B cell (primary cell): ENCODE measurements at regions of chr12 and their contacts with region 1.

Region 1: DNA sequence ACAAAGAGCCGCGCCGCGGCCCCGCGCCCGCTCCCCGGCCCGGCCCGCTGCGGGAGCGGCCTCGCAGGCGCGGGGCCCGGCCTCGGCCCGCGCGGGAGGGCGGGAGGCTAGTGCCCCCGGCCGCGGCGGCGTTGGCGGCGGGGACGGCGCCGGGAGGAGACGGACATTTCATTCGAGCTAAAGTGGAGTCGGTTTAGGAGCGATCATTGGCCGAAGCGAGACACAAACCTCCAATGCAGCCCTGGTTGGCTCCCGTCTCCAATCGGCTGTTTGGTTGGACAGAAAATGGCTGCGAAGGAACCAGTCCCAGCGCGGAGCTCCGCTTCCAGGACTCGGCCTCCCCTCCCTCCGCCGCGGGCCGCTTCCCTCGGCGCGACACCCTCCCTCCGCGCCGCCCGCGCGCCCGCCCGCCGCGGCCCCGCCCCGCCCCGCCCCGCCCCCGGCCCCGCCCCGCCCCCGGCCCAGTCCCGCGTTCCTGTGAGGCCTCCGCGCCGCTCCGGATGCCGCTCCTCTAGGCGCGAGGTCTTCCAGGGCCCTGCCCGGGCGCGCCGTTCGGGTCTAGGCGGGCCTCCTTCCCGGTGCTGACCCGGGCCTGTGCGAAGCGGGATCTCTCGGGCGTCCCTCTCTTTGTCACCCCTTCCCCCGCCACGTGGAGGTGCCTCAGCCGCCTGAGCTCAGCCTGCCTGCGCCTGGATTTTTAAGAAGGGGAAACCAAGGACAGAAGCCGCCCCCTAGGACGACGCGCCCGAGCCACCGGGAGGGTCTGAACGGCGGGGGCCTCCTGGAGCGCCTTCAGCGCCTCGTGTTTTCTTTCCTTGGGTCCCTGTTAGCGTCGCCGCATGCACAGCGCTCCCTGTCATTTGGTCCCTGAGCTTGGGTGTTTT is at the start of gene NFYB:
- DNase-seq: peak; percentile 96
- ATAC-seq: peak; percentile 94
- H3K4me3 ChIP-seq: peak within 1 kb of the TSS; percentile 52 to 73 (median 67)
- H3K4me3 Mint-ChIP-seq: peak within 1 kb of the TSS; percentile 93
- H3K27ac ChIP-seq: peak within 1 kb of the TSS; percentile 43 to 70
- H3K27ac Mint-ChIP-seq: peak within 1 kb of the TSS; percentile 92
- H3K4me1 ChIP-seq: peaks cover 24 to 25% of the 10 kb centered on the region in 2 donors
- H3K4me1 Mint-ChIP-seq: peaks cover 16% of the 10 kb centered on the region
- H3K27me3 ChIP-seq: no peaks in the 10 kb centered on the region
- H3K27me3 Mint-ChIP-seq: no peaks in the 10 kb centered on the region
- CTCF ChIP-seq: no peak
- total RNA-seq, gene NFYB: 20.2 and 27.2 TPM in 2 replicates

Region 2: DNA sequence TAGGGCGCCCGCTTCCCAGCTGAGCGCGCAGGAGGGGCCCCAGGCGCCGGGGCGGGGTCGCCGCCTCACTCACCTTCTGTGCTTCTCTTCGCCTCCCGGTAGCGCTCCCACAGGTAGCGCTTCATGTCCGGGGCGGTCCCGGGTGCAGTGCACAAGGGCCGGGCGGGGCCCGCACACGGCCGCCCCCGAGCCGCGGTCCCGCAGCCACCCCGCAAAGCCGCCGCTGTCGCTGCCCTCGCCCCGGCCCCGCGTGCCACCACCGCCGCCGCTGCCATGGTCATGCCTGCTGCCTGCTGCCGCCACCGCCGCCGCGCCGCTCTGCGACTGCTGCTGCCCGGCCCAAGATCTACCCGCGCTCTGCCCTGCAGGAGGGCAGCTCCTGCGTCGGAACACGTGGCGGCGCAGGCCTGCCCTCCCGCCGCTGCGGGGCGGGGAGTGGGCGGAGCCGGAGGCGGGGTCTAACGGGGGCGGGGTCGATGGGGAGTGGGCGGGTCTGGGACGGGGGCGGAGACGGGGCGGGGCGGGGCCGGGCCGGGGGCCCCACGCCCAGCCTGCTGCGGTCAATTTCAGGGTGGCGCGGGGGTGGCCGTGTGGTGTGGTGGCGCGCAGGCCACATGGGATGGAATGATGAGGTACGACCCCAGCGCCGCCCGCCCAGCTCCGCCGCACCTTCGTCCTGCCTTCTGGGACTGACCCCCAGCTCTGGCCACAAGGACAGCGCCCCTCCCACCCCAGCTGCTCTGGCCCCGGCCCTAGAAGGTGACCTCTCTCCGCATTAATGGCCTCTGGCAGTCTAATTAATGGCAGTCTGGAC is 297.1 kb before region 1 on chr12 and contains the start of gene NT5DC3:
- CTCF ChIA-PET with region 1: no interaction called
- POLR2A ChIA-PET with region 1: interaction called, 4 read pairs
- intact Hi-C with region 1: loop called (anchors 1 kb)
- DNase-seq: peak; percentile 92
- ATAC-seq: peak; percentile 91
- H3K4me3 ChIP-seq: peak within 1 kb of the TSS in 4 of 5 experiments; percentile 50 to 86 (median 76)
- H3K4me3 Mint-ChIP-seq: peak within 1 kb of the TSS; percentile 89
- H3K27ac ChIP-seq: no peak within 1 kb of the TSS
- H3K27ac Mint-ChIP-seq: peak within 1 kb of the TSS; percentile 88
- H3K4me1 ChIP-seq: peaks cover 14 to 22% of the 10 kb centered on the region in 2 donors
- H3K4me1 Mint-ChIP-seq: peaks cover 27% of the 10 kb centered on the region
- H3K27me3 ChIP-seq: no peaks in the 10 kb centered on the region
- H3K27me3 Mint-ChIP-seq: no peaks in the 10 kb centered on the region
- CTCF ChIP-seq: no peak
- total RNA-seq, gene NT5DC3: 10.6 and 14.7 TPM in 2 replicates

Region 3: GRCh38 chr12:103965590-103966504 is 172.3 kb before region 1 on chr12 and contains the start of gene TDG:
- CTCF ChIA-PET with region 1: no interaction called
- POLR2A ChIA-PET with region 1: interaction called, 3 read pairs
- intact Hi-C with region 1: loop called (anchors 5 kb)
- DNase-seq: peak; percentile 98
- ATAC-seq: peak; percentile 94
- H3K4me3 ChIP-seq: peak within 1 kb of the TSS; percentile 70 to 96 (median 85)
- H3K4me3 Mint-ChIP-seq: peak within 1 kb of the TSS; percentile 98
- H3K27ac ChIP-seq: peak within 1 kb of the TSS; percentile 81 to 95
- H3K27ac Mint-ChIP-seq: peak within 1 kb of the TSS; percentile 97
- H3K4me1 ChIP-seq: peaks cover 26% of the 10 kb centered on the region in 2 donors
- H3K4me1 Mint-ChIP-seq: peaks cover 41% of the 10 kb centered on the region
- H3K27me3 ChIP-seq: no peaks in the 10 kb centered on the region
- H3K27me3 Mint-ChIP-seq: no peaks in the 10 kb centered on the region
- CTCF ChIP-seq: peak; percentile 26
- total RNA-seq, gene TDG: 35.5 and 40.5 TPM in 2 replicates

Region 4: DNA sequence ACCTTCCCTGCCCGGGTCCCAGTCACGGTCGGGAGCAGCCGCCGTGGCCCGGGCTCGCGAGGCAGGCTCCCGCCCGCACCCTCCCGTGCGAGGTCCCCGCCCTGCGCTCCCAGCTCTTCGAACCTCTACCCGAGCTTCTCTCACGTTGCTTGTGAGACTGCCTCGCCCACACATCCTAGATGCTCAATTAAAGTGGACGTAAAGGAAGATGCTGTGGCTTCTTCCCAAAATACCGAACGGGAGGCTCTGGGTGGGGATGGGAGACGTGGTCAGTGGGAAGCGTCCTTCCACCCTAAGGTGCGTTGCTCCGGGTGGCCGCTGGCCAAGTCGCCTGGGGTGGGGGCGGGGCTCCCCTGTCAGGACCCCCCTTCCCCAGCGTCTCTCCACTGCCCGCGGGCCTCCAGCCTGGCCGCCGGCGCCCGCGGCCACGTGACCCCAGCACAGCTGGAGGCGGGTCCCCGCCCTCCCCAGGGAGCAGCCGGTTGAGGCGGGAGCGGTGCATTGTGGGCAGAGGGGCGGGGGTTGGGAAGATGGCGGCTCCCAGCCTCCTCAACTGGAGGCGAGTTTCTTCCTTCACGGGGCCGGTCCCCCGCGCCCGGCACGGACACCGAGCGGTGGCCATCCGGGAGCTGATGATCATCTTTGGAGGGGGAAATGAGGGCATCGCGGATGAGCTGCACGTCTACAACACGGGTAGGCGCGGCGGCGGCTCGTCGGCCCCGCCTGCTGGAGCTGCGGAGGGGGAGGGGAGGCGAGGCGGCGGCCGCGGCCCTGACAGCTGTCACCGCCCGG is 73.9 kb before region 1 on chr12 and contains the start of gene HCFC2:
- CTCF ChIA-PET with region 1: interaction called, 3 read pairs
- POLR2A ChIA-PET with region 1: no interaction called
- intact Hi-C with region 1: loop called (anchors 1 kb)
- DNase-seq: peak; percentile 94
- ATAC-seq: peak; percentile 92
- H3K4me3 ChIP-seq: peak within 1 kb of the TSS; percentile 80 to 95 (median 85)
- H3K4me3 Mint-ChIP-seq: peak within 1 kb of the TSS; percentile 94
- H3K27ac ChIP-seq: peak within 1 kb of the TSS; percentile 36 to 79
- H3K27ac Mint-ChIP-seq: peak within 1 kb of the TSS; percentile 93
- H3K4me1 ChIP-seq: peaks cover 10 to 14% of the 10 kb centered on the region in 2 donors
- H3K4me1 Mint-ChIP-seq: peaks cover 17% of the 10 kb centered on the region
- H3K27me3 ChIP-seq: no peaks in the 10 kb centered on the region
- H3K27me3 Mint-ChIP-seq: peaks cover 9% of the 10 kb centered on the region
- CTCF ChIP-seq: no peak
- total RNA-seq, gene HCFC2: 10.5 and 11.6 TPM in 2 replicates

Region 5: GRCh38 chr12:104303538-104304151 is 165.5 kb after region 1 on chr12 and contains the start of gene EID3:
- CTCF ChIA-PET with region 1: no interaction called
- POLR2A ChIA-PET with region 1: interaction called, 5 read pairs
- intact Hi-C with region 1: loop called (anchors 5 kb)
- DNase-seq: peak; percentile 89
- ATAC-seq: peak; percentile 97
- H3K4me3 ChIP-seq: peak within 1 kb of the TSS; percentile 19 to 74 (median 62)
- H3K4me3 Mint-ChIP-seq: peak within 1 kb of the TSS; percentile 89
- H3K27ac ChIP-seq: peak within 1 kb of the TSS; percentile 54 to 74
- H3K27ac Mint-ChIP-seq: peak within 1 kb of the TSS; percentile 86
- H3K4me1 ChIP-seq: peaks cover 15 to 19% of the 10 kb centered on the region in 2 donors
- H3K4me1 Mint-ChIP-seq: peaks cover 52% of the 10 kb centered on the region
- H3K27me3 ChIP-seq: no peaks in the 10 kb centered on the region
- H3K27me3 Mint-ChIP-seq: no peaks in the 10 kb centered on the region
- CTCF ChIP-seq: no peak
- total RNA-seq, gene EID3: 9.2 and 9.4 TPM in 2 replicates

Region 6: GRCh38 chr12:105235732-105236476 is 1097.7 kb after region 1 on chr12 and contains the start of gene APPL2:
- CTCF ChIA-PET with region 1: no interaction called
- POLR2A ChIA-PET with region 1: no interaction called
- intact Hi-C with region 1: loop called (anchors 5 kb)
- DNase-seq: peak; percentile 92
- ATAC-seq: peak; percentile 81
- H3K4me3 ChIP-seq: peak within 1 kb of the TSS; percentile 51 to 90 (median 71)
- H3K4me3 Mint-ChIP-seq: peak within 1 kb of the TSS; percentile 95
- H3K27ac ChIP-seq: peak within 1 kb of the TSS; percentile 70 to 95
- H3K27ac Mint-ChIP-seq: peak within 1 kb of the TSS; percentile 94
- H3K4me1 ChIP-seq: peaks cover 44 to 49% of the 10 kb centered on the region in 2 donors
- H3K4me1 Mint-ChIP-seq: peaks cover 38% of the 10 kb centered on the region
- H3K27me3 ChIP-seq: no peaks in the 10 kb centered on the region
- H3K27me3 Mint-ChIP-seq: no peaks in the 10 kb centered on the region
- CTCF ChIP-seq: peak; percentile 66
- total RNA-seq, gene APPL2: 57.7 and 58.3 TPM in 2 replicates

Region 7: DNA sequence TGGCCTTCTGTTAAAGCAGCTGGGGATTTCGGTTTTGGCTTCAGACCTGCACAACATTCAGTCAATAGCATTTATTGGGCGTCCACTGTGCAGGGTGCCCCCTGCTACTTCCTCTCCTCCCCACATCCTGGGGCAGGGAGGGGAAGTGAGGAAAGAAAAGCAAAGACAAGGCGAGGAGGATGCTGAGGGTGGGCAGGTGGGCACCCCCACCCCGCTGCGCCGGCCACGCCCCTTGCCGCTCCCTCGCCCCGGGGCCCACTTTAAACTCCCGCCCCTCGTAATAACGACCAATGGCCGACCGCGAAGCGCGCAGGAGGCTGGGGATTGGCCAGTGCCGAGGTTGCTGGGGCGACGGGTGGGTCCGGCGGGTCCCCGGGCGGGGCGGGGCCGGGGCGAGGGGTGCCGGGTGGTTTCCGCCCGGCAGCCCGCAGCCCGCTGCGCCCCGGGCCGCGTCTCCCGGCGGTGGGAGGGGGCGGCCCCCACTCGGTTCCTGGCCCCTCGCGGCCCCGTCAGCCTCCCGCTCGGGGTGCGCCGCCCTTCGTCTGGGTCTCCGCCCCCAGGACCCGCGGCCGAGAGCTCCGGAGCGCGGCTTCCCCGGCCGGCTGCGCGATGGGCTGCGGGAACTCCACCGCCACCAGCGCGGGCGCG is 1192.3 kb after region 1 on chr12 and contains the start of gene C12orf75:
- CTCF ChIA-PET with region 1: interaction called, 5 read pairs
- POLR2A ChIA-PET with region 1: no interaction called
- intact Hi-C with region 1: loop called (anchors 5 kb)
- DNase-seq: peak; percentile 89
- ATAC-seq: peak; percentile 93
- H3K4me3 ChIP-seq: peak within 1 kb of the TSS; percentile 25 to 78 (median 69)
- H3K4me3 Mint-ChIP-seq: peak within 1 kb of the TSS; percentile 92
- H3K27ac ChIP-seq: peak within 1 kb of the TSS; percentile 52 to 69
- H3K27ac Mint-ChIP-seq: peak within 1 kb of the TSS; percentile 86
- H3K4me1 ChIP-seq: peaks cover 27 to 38% of the 10 kb centered on the region in 2 donors
- H3K4me1 Mint-ChIP-seq: peaks cover 44% of the 10 kb centered on the region
- H3K27me3 ChIP-seq: no peaks in the 10 kb centered on the region
- H3K27me3 Mint-ChIP-seq: no peaks in the 10 kb centered on the region
- CTCF ChIP-seq: no peak
- total RNA-seq, gene C12orf75: 7.9 and 12.9 TPM in 2 replicates